ENCODE measurements at regions of chr6 and their contacts with region 1.

Region 1: DNA sequence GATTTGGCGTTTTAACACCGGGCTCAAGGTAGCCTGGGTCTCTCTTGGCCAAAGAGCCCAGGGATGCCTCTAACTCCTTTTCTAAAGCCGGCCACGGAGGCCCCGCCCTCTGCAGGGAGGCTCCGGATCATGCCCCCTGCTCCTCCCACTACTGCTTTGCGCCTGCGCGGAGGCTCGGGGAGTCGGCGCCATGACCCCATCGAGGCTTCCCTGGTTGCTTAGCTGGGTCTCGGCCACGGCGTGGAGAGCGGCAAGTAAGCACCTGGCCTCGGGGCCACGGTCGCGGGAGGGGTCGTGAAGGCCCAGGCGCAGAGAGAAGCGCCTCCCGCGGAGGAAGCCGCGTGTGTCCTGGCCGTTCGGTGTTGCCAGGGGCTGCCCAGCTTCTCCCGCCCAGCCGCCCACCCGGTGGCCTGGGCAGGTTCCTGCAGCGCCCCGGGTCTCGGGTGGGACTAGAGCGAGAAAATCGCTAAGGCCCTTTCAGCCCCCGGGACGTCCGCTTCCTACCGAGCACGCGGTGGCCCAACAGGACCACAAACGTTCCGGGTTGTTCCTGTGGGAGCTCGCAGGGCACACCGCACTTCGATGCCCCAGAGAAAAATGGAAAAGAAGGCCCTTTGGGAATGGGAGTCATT is at the start of gene SDHAF4:
- DNase-seq: peak; percentile 96
- H3K4me3 ChIP-seq: peak within 1 kb of the TSS; percentile 71 to 84 (median 82)
- H3K27ac ChIP-seq: peak within 1 kb of the TSS; percentile 86 to 92 (median 90)
- H3K4me1 ChIP-seq: peaks cover 0 to 16% (median 4%) of the 10 kb centered on the region in 4 donors
- H3K27me3 ChIP-seq: no peaks in the 10 kb centered on the region
- CTCF ChIP-seq: peak in 1 of 4 experiments; percentile 17
- EP300 ChIP-seq: no peak
- POLR2A ChIP-seq: peak; percentile 31 to 54
- total RNA-seq, gene SDHAF4: 4.9 to 11.1 (median 6.0) TPM

Region 2: DNA sequence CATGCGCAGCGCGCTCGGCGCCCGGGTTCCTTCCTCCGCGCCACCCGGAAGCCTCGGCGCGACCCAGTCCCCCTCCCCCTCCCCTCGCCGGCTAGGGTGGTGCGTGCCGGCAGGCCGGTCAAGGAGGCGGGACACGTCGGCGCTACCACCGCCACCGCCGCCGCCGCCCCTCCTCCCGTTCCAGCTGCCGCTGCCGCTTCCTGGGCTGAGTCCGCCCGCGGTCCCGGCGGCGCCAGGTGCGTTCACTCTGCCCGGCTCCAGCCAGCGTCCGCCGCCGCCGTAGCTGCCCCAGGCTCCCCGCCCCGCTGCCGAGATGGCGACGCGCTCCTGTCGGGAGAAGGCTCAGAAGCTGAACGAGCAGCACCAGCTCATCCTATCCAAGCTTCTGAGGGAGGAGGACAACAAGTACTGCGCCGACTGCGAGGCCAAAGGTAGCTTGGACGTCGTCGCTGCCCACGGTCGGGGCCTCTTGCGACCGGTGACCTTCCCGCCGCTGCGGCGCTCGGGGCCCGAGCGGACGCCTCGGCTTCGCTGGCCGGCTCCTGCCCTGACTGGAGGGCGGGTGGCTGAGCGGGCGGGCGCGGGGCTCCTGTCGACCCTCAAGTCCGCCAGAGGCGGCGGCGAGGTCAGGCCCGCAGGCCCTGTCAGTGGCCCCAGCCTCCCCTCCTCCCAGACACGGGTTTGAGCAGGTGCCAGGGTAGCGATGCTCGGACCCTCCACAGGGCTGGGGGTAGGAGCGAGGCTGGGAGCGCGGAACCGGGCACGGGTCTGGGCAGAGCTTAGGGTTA is 101.0 kb after region 1 on chr6 and contains the start of gene SMAP1:
- intact Hi-C with region 1: loop called (anchors 5 kb)
- DNase-seq: peak; percentile 96
- H3K4me3 ChIP-seq: peak within 1 kb of the TSS; percentile 72 to 87 (median 80)
- H3K27ac ChIP-seq: peak within 1 kb of the TSS; percentile 90 to 95 (median 90)
- H3K4me1 ChIP-seq: peaks cover 0 to 26% (median 18%) of the 10 kb centered on the region in 4 donors
- H3K27me3 ChIP-seq: no peaks in the 10 kb centered on the region
- CTCF ChIP-seq: no peak
- EP300 ChIP-seq: peak in 1 of 4 donors; percentile 30
- POLR2A ChIP-seq: peak in 1 of 2 donors; percentile 38
- total RNA-seq, gene SMAP1: 19.7 to 34.3 (median 24.6) TPM